CD4-positive, alpha-beta memory T cell (primary cell): ENCODE measurements at regions of chr12 and their contacts with region 1.

Region 1: DNA sequence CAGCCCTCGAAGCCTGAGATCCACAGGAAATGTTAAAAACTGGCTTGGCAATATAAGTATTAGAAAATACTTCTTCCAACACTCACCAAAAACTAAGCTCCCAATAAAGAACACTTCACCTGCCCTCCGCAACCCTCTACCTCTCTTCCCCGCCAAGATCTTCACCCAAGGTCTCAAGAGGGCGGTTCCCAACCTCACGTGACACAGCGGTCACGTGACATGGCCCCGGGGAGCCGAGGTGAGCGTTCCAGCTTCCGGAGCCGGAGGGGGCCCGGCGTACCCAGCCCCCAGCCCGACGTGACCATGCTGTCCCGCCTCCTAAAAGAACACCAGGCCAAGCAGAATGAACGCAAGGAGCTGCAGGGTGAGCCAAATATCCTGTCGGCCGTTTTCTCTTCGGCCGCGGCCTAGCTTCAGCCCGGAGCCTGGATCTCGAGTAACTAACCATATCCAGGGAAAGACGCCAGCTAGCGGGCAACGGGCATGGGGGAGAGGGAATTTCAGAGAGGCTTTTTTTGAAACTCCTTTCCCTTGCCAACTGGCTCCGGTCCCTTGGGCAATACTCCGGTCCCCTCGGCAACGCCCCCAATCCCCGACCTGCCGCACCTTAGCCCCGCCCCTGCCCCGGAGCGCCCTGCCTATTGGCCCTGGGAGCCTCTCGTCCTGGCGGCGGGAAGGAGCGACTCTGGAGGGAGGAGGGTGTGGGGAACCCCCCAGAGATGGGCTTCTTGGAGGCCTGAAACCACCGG is at the start of gene BLOC1S1:
- DNase-seq: peak; percentile 88 to 94 (median 90)
- H3K4me3 ChIP-seq: peak within 1 kb of the TSS; percentile 84 to 99
- H3K4me3 Mint-ChIP-seq: peak within 1 kb of the TSS; percentile 90 to 99 (median 94)
- H3K27ac ChIP-seq: peak within 1 kb of the TSS; percentile 91
- H3K27ac Mint-ChIP-seq: peak within 1 kb of the TSS; percentile 94 to 99 (median 98)
- H3K4me1 ChIP-seq: peaks cover 39% of the 10 kb centered on the region
- H3K4me1 Mint-ChIP-seq: peaks cover 18 to 50% (median 36%) of the 10 kb centered on the region in 4 donors
- H3K27me3 ChIP-seq: no peaks in the 10 kb centered on the region
- H3K27me3 Mint-ChIP-seq: peaks cover 0 to 1% of the 10 kb centered on the region in 2 donors
- total RNA-seq, gene BLOC1S1: 80.3 to 87.0 TPM

Region 2: GRCh38 chr12:55642669-55643068 is 73.3 kb before region 1 on chr12:
- CTCF ChIA-PET with region 1: interaction called, 5 read pairs
- POLR2A ChIA-PET with region 1: no interaction called
- intact Hi-C with region 1: loop called (anchors 5 kb)
- DNase-seq: no peak
- H3K4me3 ChIP-seq: no peak overlapping the region
- H3K4me3 Mint-ChIP-seq: peak overlapping the region in 1 of 8 donors; percentile 37
- H3K27ac ChIP-seq: no peak overlapping the region
- H3K27ac Mint-ChIP-seq: peak overlapping the region in 3 of 7 donors; percentile 50 to 83 (median 57)
- H3K4me1 ChIP-seq: peaks cover 21% of the 10 kb centered on the region
- H3K4me1 Mint-ChIP-seq: peaks cover 14 to 31% (median 22%) of the 10 kb centered on the region in 4 donors
- H3K27me3 ChIP-seq: no peaks in the 10 kb centered on the region
- H3K27me3 Mint-ChIP-seq: peaks cover 0 to 4% of the 10 kb centered on the region in 2 donors

Region 3: GRCh38 chr12:55663391-55663790 is 52.6 kb before region 1 on chr12:
- CTCF ChIA-PET with region 1: no interaction called
- POLR2A ChIA-PET with region 1: no interaction called
- intact Hi-C with region 1: no loop called
- DNase-seq: no peak
- H3K4me3 ChIP-seq: no peak overlapping the region
- H3K4me3 Mint-ChIP-seq: no peak overlapping the region
- H3K27ac ChIP-seq: no peak overlapping the region
- H3K27ac Mint-ChIP-seq: peak overlapping the region in 1 of 7 donors; percentile 23
- H3K4me1 ChIP-seq: no peaks in the 10 kb centered on the region
- H3K4me1 Mint-ChIP-seq: no peaks in the 10 kb centered on the region
- H3K27me3 ChIP-seq: no peaks in the 10 kb centered on the region
- H3K27me3 Mint-ChIP-seq: peaks cover 3 to 4% of the 10 kb centered on the region in 2 donors

Region 4: GRCh38 chr12:55728939-55729823 is 13.2 kb after region 1 on chr12 and contains the start of gene CD63:
- CTCF ChIA-PET with region 1: interaction called, 12 read pairs
- POLR2A ChIA-PET with region 1: interaction called, 42 read pairs
- intact Hi-C with region 1: loop called (anchors 1 kb)
- DNase-seq: peak; percentile 34 to 71 (median 35)
- H3K4me3 ChIP-seq: peak within 1 kb of the TSS; percentile 79 to 86
- H3K4me3 Mint-ChIP-seq: peak within 1 kb of the TSS; percentile 91 to 94 (median 91)
- H3K27ac ChIP-seq: peak within 1 kb of the TSS; percentile 60
- H3K27ac Mint-ChIP-seq: peak within 1 kb of the TSS; percentile 75 to 97 (median 95)
- H3K4me1 ChIP-seq: peaks cover 28% of the 10 kb centered on the region
- H3K4me1 Mint-ChIP-seq: peaks cover 33 to 52% (median 42%) of the 10 kb centered on the region in 4 donors
- H3K27me3 ChIP-seq: no peaks in the 10 kb centered on the region
- H3K27me3 Mint-ChIP-seq: no peaks in the 10 kb centered on the region
- total RNA-seq, gene CD63: 76.4 to 79.7 TPM